Testis (tissue), 5 donors: ENCODE measurements at regions of chr5 and their contacts with region 1.

Region 1: DNA sequence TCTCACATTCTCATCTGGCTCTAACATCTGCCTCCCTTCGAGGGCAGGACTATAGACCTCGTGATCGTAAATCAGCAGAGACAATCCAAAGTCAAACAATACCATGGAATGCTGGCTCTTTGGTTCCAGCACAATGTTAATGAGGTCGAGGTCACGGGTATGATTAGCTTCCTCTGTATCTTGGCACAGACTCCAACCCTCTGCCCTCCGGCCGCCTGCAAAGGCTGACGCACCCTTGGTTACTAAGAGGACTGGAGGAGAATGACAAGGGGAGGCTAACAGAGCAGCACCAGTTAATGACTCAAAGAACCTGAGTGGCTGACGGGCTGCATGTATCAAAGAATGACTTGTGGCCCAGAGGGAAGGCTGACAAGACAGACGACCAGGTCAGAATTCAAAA is 10.1 kb downstream of the LHFPL2 start:
- DNase-seq: peak; percentile 87
- H3K4me3 ChIP-seq: no peak overlapping the region
- H3K27ac ChIP-seq: peak overlapping the region; percentile 68 to 76
- H3K4me1 ChIP-seq: peaks cover 71% of the 10 kb centered on the region
- H3K27me3 ChIP-seq: no peaks in the 10 kb centered on the region
- CTCF ChIP-seq: no peak
- POLR2A ChIP-seq: no peak

Region 2: DNA sequence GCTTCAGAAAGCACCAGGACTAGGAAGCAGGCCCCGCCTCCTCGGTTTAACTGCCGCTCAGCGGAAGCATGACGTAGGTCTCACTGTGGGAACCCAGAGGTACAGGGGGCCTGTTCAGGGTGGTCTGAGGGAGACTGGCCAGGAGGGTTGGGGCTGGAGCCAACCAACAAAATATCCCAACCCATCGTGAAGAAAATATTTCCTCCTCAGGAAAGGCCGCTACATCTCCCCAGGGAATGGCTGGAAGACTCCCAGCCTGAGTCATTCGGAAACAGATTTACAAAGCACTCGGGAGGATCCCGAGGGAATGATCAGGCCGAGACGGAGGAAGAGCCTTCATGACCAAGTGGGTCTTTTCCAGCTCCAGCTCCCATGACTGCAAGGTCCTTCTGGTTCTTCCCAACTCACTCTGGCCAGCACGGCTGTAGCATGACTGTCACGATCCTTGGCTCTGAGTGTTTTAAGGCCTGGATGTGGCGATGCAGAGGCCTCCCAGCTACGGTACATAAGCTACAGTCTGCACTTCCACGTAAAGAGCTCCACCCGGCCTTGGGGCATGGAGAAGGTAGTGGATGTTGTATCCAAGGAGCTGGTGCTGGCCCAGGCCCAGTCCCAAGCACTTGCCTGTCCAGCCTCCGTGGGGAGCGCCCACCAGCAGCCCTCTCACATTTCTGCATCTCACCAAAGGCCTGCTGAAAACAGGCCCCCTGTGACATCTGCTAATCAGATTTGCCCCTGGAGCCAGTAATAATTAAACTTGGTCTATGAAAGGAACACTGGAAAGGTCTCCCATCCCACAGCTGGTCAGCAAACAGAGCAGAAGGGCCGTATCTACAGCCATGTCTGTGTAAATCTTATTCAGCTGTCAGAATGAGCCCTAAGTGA is 90.5 kb before region 1 on chr5:
- intact Hi-C with region 1: loop called (anchors 10 kb)
- DNase-seq: peak; percentile 88
- H3K4me3 ChIP-seq: no peak overlapping the region
- H3K27ac ChIP-seq: peak overlapping the region; percentile 71 to 75
- H3K4me1 ChIP-seq: peaks cover 15% of the 10 kb centered on the region
- H3K27me3 ChIP-seq: no peaks in the 10 kb centered on the region
- CTCF ChIP-seq: no peak
- POLR2A ChIP-seq: no peak

Region 3: GRCh38 chr5:78964887-78965286 is 326.5 kb after region 1 on chr5:
- intact Hi-C with region 1: no loop called
- DNase-seq: no peak
- H3K4me3 ChIP-seq: no peak overlapping the region
- H3K27ac ChIP-seq: no peak overlapping the region
- H3K4me1 ChIP-seq: no peaks in the 10 kb centered on the region
- H3K27me3 ChIP-seq: no peaks in the 10 kb centered on the region
- CTCF ChIP-seq: peak; percentile 23 to 38 (median 26)
- POLR2A ChIP-seq: no peak